Endothelial cell of umbilical vein (primary cell): ENCODE measurements at regions of chr1 and their contacts with region 1.

Region 1: GRCh38 chr1:201530741-201531531 is 8.0 kb upstream of the NAV1 start:
- DNase-seq: peak; percentile 77
- H3K4me3 ChIP-seq: no peak overlapping the region
- H3K27ac ChIP-seq: no peak overlapping the region
- H3K4me1 ChIP-seq: peaks cover 12% of the 10 kb centered on the region
- H3K27me3 ChIP-seq: no peaks in the 10 kb centered on the region
- CTCF ChIP-seq: peak; percentile 87 to 89
- POLR2A ChIP-seq: no peak

Region 2: GRCh38 chr1:201059871-201060555 is 470.9 kb before region 1 on chr1:
- CTCF ChIA-PET with region 1: no interaction called
- POLR2A ChIA-PET with region 1: no interaction called
- dilution Hi-C with region 1: no loop called
- intact Hi-C with region 1: no loop called
- DNase-seq: no peak
- H3K4me3 ChIP-seq: no peak overlapping the region
- H3K27ac ChIP-seq: no peak overlapping the region
- H3K4me1 ChIP-seq: no peaks in the 10 kb centered on the region
- H3K27me3 ChIP-seq: peaks cover 2 to 4% of the 10 kb centered on the region in 2 experiments
- CTCF ChIP-seq: no peak
- POLR2A ChIP-seq: no peak

Region 3: DNA sequence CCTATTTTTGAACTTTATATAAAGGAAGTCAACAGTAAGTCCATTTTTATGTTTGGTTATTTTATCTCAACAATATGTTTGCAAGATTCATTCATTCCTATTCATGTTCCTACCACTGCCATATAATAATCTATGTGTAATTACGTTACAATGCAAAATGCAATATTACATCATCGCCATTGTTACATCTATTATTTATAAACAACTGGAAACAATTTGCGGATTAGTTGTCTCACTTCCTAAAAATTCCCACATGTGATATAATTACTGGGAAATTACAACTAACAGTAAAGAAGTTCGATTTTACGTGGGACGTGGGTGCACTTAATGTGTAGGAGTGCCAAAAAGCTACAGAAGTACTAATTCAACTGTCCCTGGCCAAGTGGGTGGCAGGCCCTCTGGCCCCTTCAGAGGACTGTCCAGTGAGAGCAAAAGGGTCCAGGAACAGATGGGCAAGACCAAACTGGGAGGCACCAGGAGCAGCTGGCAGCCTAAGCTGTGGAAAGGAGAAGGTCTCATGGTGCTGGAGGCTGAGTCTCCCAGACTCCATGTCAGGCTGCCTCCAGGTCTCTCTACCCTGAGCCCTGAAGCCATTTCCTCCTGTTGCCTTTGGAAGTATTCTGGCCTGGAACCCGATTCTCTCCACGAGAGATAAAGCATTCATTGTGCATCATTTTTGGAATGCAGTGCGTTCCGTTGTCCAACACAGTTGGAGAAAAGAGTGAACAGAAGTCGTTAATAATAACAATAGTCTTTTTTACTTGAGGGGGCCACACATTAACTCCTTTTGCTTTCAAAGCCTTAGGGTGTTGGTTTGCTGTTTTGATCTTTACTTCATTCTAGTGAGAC is 196.4 kb before region 1 on chr1:
- CTCF ChIA-PET with region 1: no interaction called
- POLR2A ChIA-PET with region 1: no interaction called
- dilution Hi-C with region 1: no loop called
- intact Hi-C with region 1: no loop called
- DNase-seq: no peak
- H3K4me3 ChIP-seq: no peak overlapping the region
- H3K27ac ChIP-seq: no peak overlapping the region
- H3K4me1 ChIP-seq: no peaks in the 10 kb centered on the region
- H3K27me3 ChIP-seq: no peaks in the 10 kb centered on the region
- CTCF ChIP-seq: no peak
- POLR2A ChIP-seq: no peak

Region 4: DNA sequence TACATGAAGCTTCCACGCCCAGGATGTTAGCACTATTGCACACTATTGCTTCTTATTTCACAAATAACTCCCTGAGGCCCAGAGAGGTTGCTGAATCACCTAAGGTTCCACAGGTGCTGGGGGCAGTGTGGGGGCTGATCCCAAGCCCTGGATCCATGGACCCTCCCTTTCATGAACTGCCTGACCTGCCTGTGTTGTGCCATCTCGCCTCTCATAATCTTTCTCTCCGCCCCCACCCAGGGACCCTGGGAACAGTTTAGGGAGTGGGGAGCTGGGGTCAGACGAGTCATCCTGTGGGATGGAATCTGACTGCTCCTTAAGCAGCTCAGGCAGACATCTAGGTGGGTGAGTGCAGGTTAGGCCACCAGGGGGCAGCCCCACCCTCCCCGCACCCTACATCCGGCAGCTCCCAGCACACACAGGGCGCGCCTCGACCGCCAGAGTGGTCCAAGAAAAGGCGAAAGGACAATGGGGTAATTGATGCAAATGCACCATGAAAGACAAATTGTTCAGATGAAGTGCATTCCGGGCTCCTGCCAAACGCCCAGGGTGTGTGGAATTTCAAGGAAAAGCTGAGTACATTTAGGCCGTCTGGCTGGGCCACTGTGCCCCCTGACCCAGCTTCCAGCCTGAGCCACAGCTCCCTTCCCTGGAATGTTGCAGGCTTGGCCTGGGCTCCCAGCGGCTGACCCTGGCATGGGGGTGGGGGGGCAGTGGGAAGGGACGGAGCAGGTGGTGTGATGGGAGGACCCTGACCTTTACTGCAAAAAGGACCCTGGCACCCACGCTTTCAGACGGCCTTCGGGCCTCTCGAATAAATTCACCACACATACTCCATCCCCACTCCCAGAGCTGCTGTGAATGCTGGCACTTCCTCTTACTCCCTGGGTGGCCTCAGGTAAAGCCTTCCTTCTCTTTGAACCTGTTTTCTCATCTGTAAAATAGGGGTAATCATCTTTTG is 82.7 kb before region 1 on chr1:
- CTCF ChIA-PET with region 1: interaction called, 10 read pairs
- POLR2A ChIA-PET with region 1: no interaction called
- dilution Hi-C with region 1: no loop called
- intact Hi-C with region 1: no loop called
- DNase-seq: peak; percentile 57
- H3K4me3 ChIP-seq: no peak overlapping the region
- H3K27ac ChIP-seq: no peak overlapping the region
- H3K4me1 ChIP-seq: no peaks in the 10 kb centered on the region
- H3K27me3 ChIP-seq: peaks cover 0 to 2% of the 10 kb centered on the region in 2 experiments
- CTCF ChIP-seq: peak; percentile 72 to 80
- POLR2A ChIP-seq: no peak

Region 5: DNA sequence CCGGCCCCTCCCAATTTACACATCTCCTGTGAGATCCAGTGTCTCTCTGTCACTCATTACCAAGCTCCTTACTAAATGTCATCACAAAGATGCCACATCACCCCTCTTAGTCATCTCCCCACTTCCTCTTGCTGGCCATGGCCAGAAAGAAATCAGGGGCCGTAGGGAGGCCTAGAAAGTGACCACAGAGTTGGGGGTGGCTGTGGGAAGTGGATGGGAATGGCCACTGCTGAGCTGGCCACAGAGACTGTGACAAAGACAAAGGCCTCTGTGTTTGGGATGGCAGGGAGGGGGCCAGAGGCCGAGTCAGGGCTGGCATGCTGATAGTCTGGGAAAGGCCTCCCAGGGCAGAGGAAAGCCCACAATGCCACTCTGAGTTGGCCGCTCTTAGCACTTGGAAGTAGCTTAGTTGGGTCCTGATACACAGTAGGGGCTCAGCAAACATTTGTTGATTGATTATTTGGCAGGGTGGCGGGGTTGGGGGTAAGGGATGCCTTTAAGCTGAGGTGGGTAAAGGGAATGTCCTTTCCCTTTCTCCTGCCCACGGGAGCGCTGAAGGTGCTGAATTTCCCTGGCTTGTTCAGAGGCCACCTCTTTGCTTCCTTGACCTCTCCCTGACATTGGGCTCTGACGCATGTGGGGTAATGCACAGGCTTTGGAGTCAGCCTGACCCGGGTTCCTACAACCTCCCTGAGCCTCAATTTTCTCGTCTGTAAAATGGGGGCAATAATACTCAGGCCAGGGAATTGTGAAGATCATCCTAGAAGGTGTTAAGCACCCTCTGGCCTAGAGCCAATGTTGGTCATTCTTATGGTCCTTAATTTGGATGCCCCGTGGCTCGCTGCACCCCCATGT is 21.2 kb after region 1 on chr1:
- CTCF ChIA-PET with region 1: interaction called, 24 read pairs
- POLR2A ChIA-PET with region 1: no interaction called
- dilution Hi-C with region 1: no loop called
- intact Hi-C with region 1: no loop called
- DNase-seq: peak; percentile 31
- H3K4me3 ChIP-seq: no peak overlapping the region
- H3K27ac ChIP-seq: peak overlapping the region; percentile 38
- H3K4me1 ChIP-seq: peaks cover 48% of the 10 kb centered on the region
- H3K27me3 ChIP-seq: no peaks in the 10 kb centered on the region
- CTCF ChIP-seq: no peak
- POLR2A ChIP-seq: no peak

Region 6: GRCh38 chr1:201703621-201704439 is 172.9 kb after region 1 on chr1:
- CTCF ChIA-PET with region 1: interaction called, 70 read pairs
- POLR2A ChIA-PET with region 1: interaction called, 3 read pairs
- dilution Hi-C with region 1: no loop called
- intact Hi-C with region 1: loop called (anchors 1 kb)
- DNase-seq: peak; percentile 73
- H3K4me3 ChIP-seq: no peak overlapping the region
- H3K27ac ChIP-seq: no peak overlapping the region
- H3K4me1 ChIP-seq: no peaks in the 10 kb centered on the region
- H3K27me3 ChIP-seq: no peaks in the 10 kb centered on the region
- CTCF ChIP-seq: peak; percentile 96 to 98
- POLR2A ChIP-seq: no peak

Region 7: GRCh38 chr1:201955009-201955728 is 424.2 kb after region 1 on chr1 and contains the start of gene TIMM17A:
- CTCF ChIA-PET with region 1: no interaction called
- POLR2A ChIA-PET with region 1: no interaction called
- dilution Hi-C with region 1: no loop called
- intact Hi-C with region 1: loop called (anchors 10 kb)
- DNase-seq: peak; percentile 99
- H3K4me3 ChIP-seq: peak within 1 kb of the TSS; percentile 26 to 87 (median 68)
- H3K27ac ChIP-seq: peak within 1 kb of the TSS; percentile 71
- H3K4me1 ChIP-seq: peaks cover 10% of the 10 kb centered on the region
- H3K27me3 ChIP-seq: no peaks in the 10 kb centered on the region
- CTCF ChIP-seq: no peak
- POLR2A ChIP-seq: peak; percentile 97
- total RNA-seq, gene TIMM17A: 93.7 and 105 TPM in 2 replicates